ENCODE measurements at regions of chr5 and their contacts with region 1.

Region 1: DNA sequence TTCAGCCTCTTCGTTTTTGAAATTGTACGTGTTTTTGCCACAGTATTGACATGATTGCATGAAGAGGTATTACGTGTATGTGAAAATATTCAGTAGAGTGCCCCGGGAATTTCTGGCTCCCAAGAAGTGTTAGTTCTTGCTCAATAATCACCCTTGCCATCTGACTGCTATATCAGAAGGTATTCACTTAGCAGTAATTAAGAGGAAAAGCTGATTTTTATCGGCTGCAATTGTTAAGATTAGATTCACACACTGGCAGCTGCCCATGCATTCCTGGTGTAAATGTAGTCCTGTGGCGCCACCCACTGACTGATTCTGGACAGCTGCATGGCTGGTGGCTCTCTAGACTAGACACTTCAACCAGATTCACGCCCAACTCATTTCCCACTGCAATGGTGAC is 440.1 kb upstream of the ADAMTS16 start:
- ATAC-seq: peak; percentile 63 to 100 (median 99)
- H3K4me3 ChIP-seq: no peak overlapping the region
- H3K27ac ChIP-seq: no peak overlapping the region
- H3K4me1 ChIP-seq: peaks cover 0 to 4% of the 10 kb centered on the region in 2 donors

Region 2: GRCh38 chr5:3778000-3778550 is 922.0 kb before region 1 on chr5:
- in situ Hi-C with region 1: no loop called
- ATAC-seq: no peak
- H3K4me3 ChIP-seq: no peak overlapping the region
- H3K27ac ChIP-seq: no peak overlapping the region
- H3K4me1 ChIP-seq: peaks cover 0 to 12% of the 10 kb centered on the region in 2 donors

Region 3: GRCh38 chr5:4868109-4868735 is 168.2 kb after region 1 on chr5:
- in situ Hi-C with region 1: loop called in 1 of 9 experiments (anchors 25 kb)
- ATAC-seq: peak in 4 of 8 experiments; percentile 39 to 87 (median 78)
- H3K4me3 ChIP-seq: no peak overlapping the region
- H3K27ac ChIP-seq: no peak overlapping the region
- H3K4me1 ChIP-seq: no peaks in the 10 kb centered on the region

Region 4: GRCh38 chr5:4921929-4922328 is 221.9 kb after region 1 on chr5:
- in situ Hi-C with region 1: no loop called
- ATAC-seq: no peak
- H3K4me3 ChIP-seq: no peak overlapping the region
- H3K27ac ChIP-seq: no peak overlapping the region
- H3K4me1 ChIP-seq: peaks cover 2 to 31% of the 10 kb centered on the region in 2 donors

Region 5: GRCh38 chr5:5025775-5026406 is 325.8 kb after region 1 on chr5:
- in situ Hi-C with region 1: no loop called
- ATAC-seq: no peak
- H3K4me3 ChIP-seq: no peak overlapping the region
- H3K27ac ChIP-seq: no peak overlapping the region
- H3K4me1 ChIP-seq: no peaks in the 10 kb centered on the region

Region 6: DNA sequence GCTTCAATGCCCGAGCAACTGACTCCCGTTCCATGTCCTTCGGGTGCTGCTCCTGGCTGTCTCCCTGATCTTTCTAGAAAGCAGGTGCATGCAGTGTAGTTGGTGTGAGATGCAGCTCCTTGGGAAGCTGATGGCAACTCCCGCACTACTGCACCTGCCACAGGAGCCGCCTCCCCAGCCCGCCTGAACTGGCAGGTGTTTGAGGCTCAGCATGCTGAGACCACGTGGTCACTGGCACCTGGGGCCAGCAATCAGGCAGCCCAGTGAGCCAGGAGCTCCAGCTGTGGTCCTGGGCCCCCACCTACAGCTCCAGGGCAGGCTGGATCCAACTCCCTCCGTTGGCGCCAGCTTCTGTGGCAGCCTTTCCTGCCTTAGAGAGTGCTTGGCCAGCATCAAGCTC is 833.9 kb after region 1 on chr5:
- in situ Hi-C with region 1: no loop called
- ATAC-seq: no peak
- H3K4me3 ChIP-seq: no peak overlapping the region
- H3K27ac ChIP-seq: no peak overlapping the region
- H3K4me1 ChIP-seq: peaks cover 2 to 15% of the 10 kb centered on the region in 2 donors

Measured in motor neuron (in vitro differentiated cells).